Left ventricle myocardium superior (tissue), 1 donor: ENCODE measurements at regions of chr7 and their contacts with region 1.

Region 1: GRCh38 chr7:134834689-134835462 is 55.4 kb downstream of the CALD1 start:
- DNase-seq: peak; percentile 33
- ATAC-seq: peak; percentile 75

Region 2: DNA sequence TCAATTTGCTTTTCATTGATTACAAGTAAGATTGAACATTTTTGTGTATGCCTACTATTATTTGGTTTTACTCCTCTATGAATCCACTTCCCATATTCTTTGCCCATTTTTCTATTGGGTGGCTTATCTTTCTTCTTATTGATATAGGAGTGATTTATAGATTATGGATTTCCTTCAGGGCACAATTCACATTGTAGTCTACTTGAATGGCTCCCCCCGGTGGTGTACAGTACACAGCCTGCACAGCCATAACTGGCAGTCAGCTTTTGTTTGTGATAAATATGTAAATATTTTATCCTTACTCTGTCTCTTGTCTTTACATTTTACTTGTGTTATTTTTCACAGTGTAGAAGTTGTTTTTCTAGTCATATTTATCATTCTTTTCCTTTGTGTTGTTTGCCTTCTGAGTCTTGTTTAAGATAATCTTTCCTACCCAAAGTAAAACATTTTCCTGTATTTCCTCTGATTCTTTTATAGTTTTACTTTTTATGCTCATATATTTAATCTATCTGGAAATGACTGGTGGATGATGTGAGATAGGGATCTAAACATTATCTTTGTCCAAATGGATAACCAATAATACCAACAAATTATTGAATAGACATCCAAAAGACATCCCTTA is 79.4 kb before region 1 on chr7:
- intact Hi-C with region 1: loop called (anchors 2 kb)
- DNase-seq: peak; percentile 44
- ATAC-seq: no peak